CD4-positive, alpha-beta memory T cell (primary cell): ENCODE measurements at regions of chr2 and their contacts with region 1.

Region 1: DNA sequence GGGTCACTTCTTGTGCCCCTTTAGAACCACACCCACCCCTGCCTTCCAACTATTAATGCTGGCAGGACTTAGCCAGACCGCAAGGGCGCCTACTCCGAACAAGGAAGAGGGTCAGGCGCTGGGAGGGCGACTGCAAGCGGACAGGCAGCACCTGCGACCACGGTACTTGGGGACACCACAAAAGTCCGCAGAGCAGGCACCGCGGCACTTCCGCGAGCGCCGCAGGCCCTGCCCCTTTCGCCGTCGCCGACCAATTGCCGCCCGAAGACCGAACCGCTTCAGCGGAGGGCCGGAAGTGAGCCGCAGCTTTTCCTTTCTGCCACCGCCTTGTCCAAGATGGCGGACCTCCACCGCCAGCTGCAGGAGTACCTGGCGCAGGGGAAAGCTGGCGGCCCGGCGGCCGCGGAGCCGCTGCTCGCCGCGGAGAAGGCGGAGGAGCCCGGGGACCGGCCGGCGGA is at the start of gene SFT2D3:
- DNase-seq: peak; percentile 89 to 92 (median 91)
- H3K4me3 ChIP-seq: peak within 1 kb of the TSS; percentile 74 to 93
- H3K4me3 Mint-ChIP-seq: peak within 1 kb of the TSS; percentile 91 to 95 (median 92)
- H3K27ac ChIP-seq: peak within 1 kb of the TSS; percentile 90
- H3K27ac Mint-ChIP-seq: peak within 1 kb of the TSS; percentile 97 to 99 (median 98)
- H3K4me1 ChIP-seq: peaks cover 42% of the 10 kb centered on the region
- H3K4me1 Mint-ChIP-seq: peaks cover 25 to 53% (median 34%) of the 10 kb centered on the region in 4 donors
- H3K27me3 ChIP-seq: no peaks in the 10 kb centered on the region
- H3K27me3 Mint-ChIP-seq: no peaks in the 10 kb centered on the region
- total RNA-seq, gene SFT2D3: 14.4 to 15.4 TPM

Region 2: DNA sequence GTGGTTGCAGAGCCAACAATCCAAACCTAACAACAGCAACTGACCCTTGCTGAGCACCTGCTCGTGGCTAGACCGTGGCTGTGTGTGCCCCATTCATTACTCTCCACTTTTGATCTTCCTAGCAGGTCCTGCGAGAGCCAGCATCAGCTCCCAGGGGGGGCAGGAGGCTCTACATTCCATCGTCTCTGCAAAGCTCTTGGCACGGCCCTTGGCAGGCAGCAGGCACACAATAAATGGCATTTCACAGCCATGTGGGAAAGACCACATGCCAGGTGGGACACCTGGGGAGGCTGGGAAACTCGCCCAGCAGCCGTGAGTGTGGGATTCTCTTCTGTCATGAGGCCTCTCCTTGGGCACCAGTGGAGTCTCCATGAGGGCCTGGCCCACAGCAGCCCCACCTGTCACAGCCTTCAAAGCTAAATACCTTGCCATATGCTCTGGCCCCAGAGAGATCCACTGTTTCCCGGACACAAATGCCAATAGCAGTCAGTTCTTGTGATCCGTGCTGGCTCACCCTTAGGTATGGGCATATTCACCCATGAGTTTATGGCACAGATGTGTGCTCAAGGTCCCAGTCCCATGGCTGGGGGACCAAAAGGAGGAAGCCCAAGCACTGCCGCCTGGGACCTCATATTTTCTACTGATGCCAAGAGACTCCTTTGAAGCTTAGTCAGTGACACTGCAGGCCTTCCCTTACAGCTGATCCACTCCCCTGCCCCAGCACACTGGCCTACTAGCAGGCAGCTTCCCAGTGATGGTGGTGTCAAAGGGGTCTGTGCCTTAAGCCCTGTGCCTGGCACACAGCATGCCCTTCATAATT is 809.3 kb before region 1 on chr2:
- CTCF ChIA-PET with region 1: no interaction called
- POLR2A ChIA-PET with region 1: no interaction called
- intact Hi-C with region 1: no loop called
- DNase-seq: no peak
- H3K4me3 ChIP-seq: no peak overlapping the region
- H3K4me3 Mint-ChIP-seq: no peak overlapping the region
- H3K27ac ChIP-seq: no peak overlapping the region
- H3K27ac Mint-ChIP-seq: no peak overlapping the region
- H3K4me1 ChIP-seq: no peaks in the 10 kb centered on the region
- H3K4me1 Mint-ChIP-seq: no peaks in the 10 kb centered on the region
- H3K27me3 ChIP-seq: no peaks in the 10 kb centered on the region
- H3K27me3 Mint-ChIP-seq: peaks cover 6 to 12% of the 10 kb centered on the region in 2 donors

Region 3: GRCh38 chr2:127591221-127591923 is 109.8 kb before region 1 on chr2:
- CTCF ChIA-PET with region 1: interaction called, 3 read pairs
- POLR2A ChIA-PET with region 1: interaction called, 4 read pairs
- intact Hi-C with region 1: loop called (anchors 5 kb)
- DNase-seq: peak; percentile 44 to 56 (median 49)
- H3K4me3 ChIP-seq: no peak overlapping the region
- H3K4me3 Mint-ChIP-seq: no peak overlapping the region
- H3K27ac ChIP-seq: no peak overlapping the region
- H3K27ac Mint-ChIP-seq: no peak overlapping the region
- H3K4me1 ChIP-seq: no peaks in the 10 kb centered on the region
- H3K4me1 Mint-ChIP-seq: peaks cover 0 to 10% (median 2%) of the 10 kb centered on the region in 4 donors
- H3K27me3 ChIP-seq: no peaks in the 10 kb centered on the region
- H3K27me3 Mint-ChIP-seq: peaks cover 0 to 2% of the 10 kb centered on the region in 2 donors

Region 4: DNA sequence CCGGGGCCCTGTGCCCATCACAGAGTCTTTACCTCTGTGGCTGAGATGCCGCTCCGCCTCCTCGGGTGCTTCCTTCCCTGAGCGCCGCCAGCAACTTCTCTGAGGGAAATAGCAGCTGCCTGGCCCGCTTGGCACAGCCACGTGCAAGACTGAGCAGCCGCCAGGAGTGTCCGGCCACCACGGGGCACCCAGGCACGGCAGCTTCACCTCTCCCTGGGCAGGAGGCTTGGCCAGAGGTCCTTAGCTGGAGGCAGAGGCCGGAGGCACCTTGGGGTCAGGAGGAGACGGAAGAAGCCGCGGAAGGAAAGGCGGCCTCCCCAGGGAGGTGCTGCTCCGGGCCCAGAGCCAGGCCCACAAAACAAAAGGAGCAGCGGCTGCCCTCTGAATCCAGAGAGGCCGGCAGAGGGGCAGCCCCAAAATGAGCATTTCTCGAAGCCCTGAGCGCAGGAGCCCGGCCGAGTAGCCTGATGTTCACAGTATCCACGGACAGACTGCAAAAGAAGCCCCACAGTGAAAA is 19.9 kb before region 1 on chr2:
- CTCF ChIA-PET with region 1: no interaction called
- POLR2A ChIA-PET with region 1: no interaction called
- intact Hi-C with region 1: no loop called
- DNase-seq: no peak
- H3K4me3 ChIP-seq: no peak overlapping the region
- H3K4me3 Mint-ChIP-seq: no peak overlapping the region
- H3K27ac ChIP-seq: no peak overlapping the region
- H3K27ac Mint-ChIP-seq: no peak overlapping the region
- H3K4me1 ChIP-seq: no peaks in the 10 kb centered on the region
- H3K4me1 Mint-ChIP-seq: peaks cover 0 to 1% (median 0%) of the 10 kb centered on the region in 4 donors
- H3K27me3 ChIP-seq: no peaks in the 10 kb centered on the region
- H3K27me3 Mint-ChIP-seq: peaks cover 11 to 14% of the 10 kb centered on the region in 2 donors

Region 5: GRCh38 chr2:127810619-127811396 is 109.6 kb after region 1 on chr2 and contains the start of gene WDR33:
- CTCF ChIA-PET with region 1: interaction called, 3 read pairs
- POLR2A ChIA-PET with region 1: interaction called, 15 read pairs
- intact Hi-C with region 1: loop called (anchors 1 kb)
- DNase-seq: peak; percentile 92 to 95 (median 93)
- H3K4me3 ChIP-seq: peak within 1 kb of the TSS; percentile 68 to 98
- H3K4me3 Mint-ChIP-seq: peak within 1 kb of the TSS; percentile 93 to 99 (median 98)
- H3K27ac ChIP-seq: peak within 1 kb of the TSS; percentile 96
- H3K27ac Mint-ChIP-seq: peak within 1 kb of the TSS; percentile 98 to 100 (median 99)
- H3K4me1 ChIP-seq: peaks cover 47% of the 10 kb centered on the region
- H3K4me1 Mint-ChIP-seq: peaks cover 34 to 59% (median 48%) of the 10 kb centered on the region in 4 donors
- H3K27me3 ChIP-seq: no peaks in the 10 kb centered on the region
- H3K27me3 Mint-ChIP-seq: peaks cover 0 to 4% of the 10 kb centered on the region in 2 donors
- total RNA-seq, gene WDR33: 84.9 to 86.2 TPM

Region 6: DNA sequence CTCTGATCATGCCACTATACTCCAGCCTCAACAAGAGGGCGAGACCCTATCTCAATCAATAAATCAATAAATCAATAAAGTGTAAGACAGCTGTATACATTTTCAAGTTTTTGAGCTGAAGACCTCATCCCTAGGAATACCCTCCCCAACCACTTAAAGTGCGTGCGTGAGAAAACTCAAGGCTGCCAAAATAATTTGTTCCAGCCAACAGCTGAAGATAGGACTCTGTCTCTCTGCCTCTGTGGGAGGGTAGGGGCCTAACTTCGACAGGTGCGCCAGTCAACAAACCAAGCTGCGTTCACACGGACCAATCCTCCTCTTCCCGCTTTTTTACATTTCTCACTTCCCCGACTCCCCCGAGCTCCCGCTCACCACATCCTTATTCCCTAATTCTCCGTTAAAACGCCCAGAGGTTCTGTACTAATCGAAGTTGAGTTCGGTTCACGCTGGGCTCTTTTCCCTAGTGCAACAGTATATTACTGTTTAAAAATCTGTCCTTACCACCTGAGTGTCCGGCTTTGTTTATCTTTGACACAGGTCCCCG is 156.1 kb after region 1 on chr2:
- CTCF ChIA-PET with region 1: no interaction called
- POLR2A ChIA-PET with region 1: interaction called, 28 read pairs
- intact Hi-C with region 1: no loop called
- DNase-seq: peak in 1 of 5 donors; percentile 11
- H3K4me3 ChIP-seq: peak overlapping the region; percentile 70 to 78
- H3K4me3 Mint-ChIP-seq: peak overlapping the region; percentile 89 to 98 (median 93)
- H3K27ac ChIP-seq: peak overlapping the region; percentile 80
- H3K27ac Mint-ChIP-seq: peak overlapping the region; percentile 73 to 96 (median 93)
- H3K4me1 ChIP-seq: peaks cover 53% of the 10 kb centered on the region
- H3K4me1 Mint-ChIP-seq: peaks cover 26 to 62% (median 41%) of the 10 kb centered on the region in 4 donors
- H3K27me3 ChIP-seq: no peaks in the 10 kb centered on the region
- H3K27me3 Mint-ChIP-seq: no peaks in the 10 kb centered on the region

Region 7: GRCh38 chr2:128090945-128091725 is 389.9 kb after region 1 on chr2 and contains the start of gene UGGT1:
- CTCF ChIA-PET with region 1: no interaction called
- POLR2A ChIA-PET with region 1: interaction called, 13 read pairs
- intact Hi-C with region 1: loop called (anchors 2 kb)
- DNase-seq: peak; percentile 91 to 95 (median 93)
- H3K4me3 ChIP-seq: peak within 1 kb of the TSS; percentile 86 to 98
- H3K4me3 Mint-ChIP-seq: peak within 1 kb of the TSS; percentile 88 to 98 (median 93)
- H3K27ac ChIP-seq: peak within 1 kb of the TSS; percentile 81
- H3K27ac Mint-ChIP-seq: peak within 1 kb of the TSS; percentile 90 to 98 (median 96)
- H3K4me1 ChIP-seq: peaks cover 33% of the 10 kb centered on the region
- H3K4me1 Mint-ChIP-seq: peaks cover 27 to 61% (median 40%) of the 10 kb centered on the region in 4 donors
- H3K27me3 ChIP-seq: no peaks in the 10 kb centered on the region
- H3K27me3 Mint-ChIP-seq: no peaks in the 10 kb centered on the region
- total RNA-seq, gene UGGT1: 56.8 to 60.2 TPM